HepG2 (cell line): ENCODE measurements at regions of chr4 and their contacts with region 1.

Region 1: DNA sequence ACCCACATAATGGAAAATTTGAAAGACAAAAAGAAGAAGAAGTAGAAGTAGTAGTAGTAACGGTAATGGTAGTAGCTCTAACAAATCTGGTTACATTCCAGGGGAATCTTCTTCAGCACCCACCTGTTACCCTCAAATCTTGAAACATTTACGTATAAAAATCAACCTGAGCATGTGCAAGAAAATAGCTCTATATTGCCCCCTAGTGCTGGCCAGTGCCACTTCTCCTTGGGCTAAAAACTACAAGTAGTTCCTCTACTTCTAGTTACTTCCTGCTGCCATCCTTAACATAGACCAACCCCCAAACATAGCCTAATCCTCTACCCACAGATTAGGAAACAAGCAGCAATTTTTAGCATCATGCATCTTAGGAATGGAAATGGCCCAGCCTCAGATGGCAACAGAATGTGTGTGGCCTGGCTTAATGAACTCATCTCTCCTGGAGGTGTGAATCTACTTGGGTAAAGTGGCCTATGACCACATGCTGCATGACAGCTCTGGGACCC is 3.1 kb downstream of the PDGFC start:
- DNase-seq: peak; percentile 55
- ATAC-seq: no peak
- H3K4me3 ChIP-seq: peak overlapping the region; percentile 24 to 82 (median 78); a peak in 5 of 6 replicates
- H3K27ac ChIP-seq: no peak overlapping the region
- H3K4me1 ChIP-seq: peaks cover 45% of the 10 kb centered on the region
- H3K27me3 ChIP-seq: no peaks in the 10 kb centered on the region; a peak in 1 of 5 replicates
- CTCF ChIP-seq: peak; percentile 76
- EP300 ChIP-seq: no peak
- POLR2A ChIP-seq: no peak
- RAD21 ChIP-seq: peak; percentile 65; the same call in 1 of the 2 replicates

Region 2: GRCh38 chr4:156475322-156475721 is 493.2 kb before region 1 on chr4:
- CTCF ChIA-PET with region 1: interaction called, 3 read pairs
- POLR2A ChIA-PET with region 1: no interaction called
- in situ Hi-C with region 1: loop called (anchors 10 kb)
- intact Hi-C with region 1: loop called (anchors 2 kb)
- DNase-seq: peak; percentile 15
- ATAC-seq: peak; percentile 75
- H3K4me3 ChIP-seq: no peak overlapping the region
- H3K27ac ChIP-seq: no peak overlapping the region
- H3K4me1 ChIP-seq: no peaks in the 10 kb centered on the region
- H3K27me3 ChIP-seq: no peaks in the 10 kb centered on the region
- CTCF ChIP-seq: peak; percentile 51
- EP300 ChIP-seq: no peak
- POLR2A ChIP-seq: no peak
- RAD21 ChIP-seq: no peak

Region 3: DNA sequence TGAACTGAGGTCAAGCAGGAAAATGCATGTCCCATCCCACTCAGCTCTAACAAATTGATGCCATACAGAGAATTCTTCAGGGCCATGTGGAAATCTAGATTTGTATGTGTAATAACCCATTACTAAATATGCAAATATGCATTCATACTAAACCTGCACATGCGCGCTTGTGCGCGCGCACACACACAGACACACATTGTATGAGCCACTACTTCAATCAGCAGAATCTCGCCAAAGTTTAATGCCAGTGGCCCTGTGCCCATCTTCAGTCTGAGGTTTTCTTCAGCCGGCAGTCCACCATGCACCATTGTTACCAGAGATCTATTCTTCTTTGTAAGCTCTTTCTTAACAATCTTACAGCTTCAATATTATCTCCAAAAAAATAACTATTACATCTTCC is 273.4 kb before region 1 on chr4:
- CTCF ChIA-PET with region 1: no interaction called
- POLR2A ChIA-PET with region 1: no interaction called
- in situ Hi-C with region 1: loop called (anchors 10 kb)
- intact Hi-C with region 1: no loop called
- DNase-seq: no peak
- ATAC-seq: no peak
- H3K4me3 ChIP-seq: no peak overlapping the region
- H3K27ac ChIP-seq: no peak overlapping the region
- H3K4me1 ChIP-seq: no peaks in the 10 kb centered on the region
- H3K27me3 ChIP-seq: no peaks in the 10 kb centered on the region
- CTCF ChIP-seq: no peak
- EP300 ChIP-seq: no peak
- POLR2A ChIP-seq: no peak
- RAD21 ChIP-seq: no peak

Region 4: GRCh38 chr4:156771171-156771837 is 197.2 kb before region 1 on chr4:
- CTCF ChIA-PET with region 1: no interaction called
- POLR2A ChIA-PET with region 1: no interaction called
- in situ Hi-C with region 1: loop called (anchors 10 kb)
- intact Hi-C with region 1: loop called (anchors 5 kb)
- DNase-seq: peak; percentile 36
- ATAC-seq: no peak
- H3K4me3 ChIP-seq: no peak overlapping the region
- H3K27ac ChIP-seq: peak overlapping the region; percentile 43
- H3K4me1 ChIP-seq: peaks cover 15% of the 10 kb centered on the region
- H3K27me3 ChIP-seq: no peaks in the 10 kb centered on the region
- CTCF ChIP-seq: no peak
- EP300 ChIP-seq: no peak
- POLR2A ChIP-seq: no peak
- RAD21 ChIP-seq: no peak

Region 5: DNA sequence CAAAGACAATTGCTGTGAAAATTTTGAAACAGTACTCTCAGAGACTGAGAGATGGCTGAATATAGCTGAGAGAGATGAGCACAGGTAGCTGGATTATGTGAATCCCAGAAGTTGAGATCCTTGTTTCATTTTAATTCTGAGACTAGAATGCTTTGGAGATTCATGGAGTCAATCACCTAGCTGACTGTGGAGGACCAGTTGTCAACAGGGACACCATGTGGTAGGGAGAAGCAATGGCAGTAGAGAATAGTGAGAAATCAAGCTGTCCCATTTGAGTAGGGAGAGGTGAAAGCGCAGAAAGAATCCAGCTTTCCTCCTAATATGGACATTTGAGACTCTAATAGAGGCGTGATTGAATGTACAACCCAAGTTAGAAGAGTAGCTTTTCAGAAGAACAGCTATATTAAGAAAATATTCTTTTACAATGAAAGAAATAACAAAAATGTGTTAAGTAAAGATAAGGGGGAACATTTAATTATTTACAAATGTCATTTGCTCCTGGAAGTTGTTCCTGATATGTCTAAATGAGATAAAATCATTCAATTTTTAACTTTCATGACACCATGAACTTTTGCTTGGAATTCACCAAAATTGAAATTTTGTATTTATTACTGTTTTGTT is 77.1 kb after region 1 on chr4:
- CTCF ChIA-PET with region 1: interaction called, 3 read pairs
- POLR2A ChIA-PET with region 1: interaction called, 3 read pairs
- in situ Hi-C with region 1: no loop called
- intact Hi-C with region 1: loop called (anchors 1 kb)
- DNase-seq: peak; percentile 47
- ATAC-seq: peak; percentile 96
- H3K4me3 ChIP-seq: no peak overlapping the region
- H3K27ac ChIP-seq: no peak overlapping the region
- H3K4me1 ChIP-seq: no peaks in the 10 kb centered on the region
- H3K27me3 ChIP-seq: 0 out of 5 replicates have a peak, but pooled peaks cover 0 to 3% of the 10 kb centered on the region in 2 experiments
- CTCF ChIP-seq: peak; percentile 83
- EP300 ChIP-seq: no peak
- POLR2A ChIP-seq: no peak
- RAD21 ChIP-seq: peak; percentile 53; the same call in 1 of the 2 replicates

Region 6: DNA sequence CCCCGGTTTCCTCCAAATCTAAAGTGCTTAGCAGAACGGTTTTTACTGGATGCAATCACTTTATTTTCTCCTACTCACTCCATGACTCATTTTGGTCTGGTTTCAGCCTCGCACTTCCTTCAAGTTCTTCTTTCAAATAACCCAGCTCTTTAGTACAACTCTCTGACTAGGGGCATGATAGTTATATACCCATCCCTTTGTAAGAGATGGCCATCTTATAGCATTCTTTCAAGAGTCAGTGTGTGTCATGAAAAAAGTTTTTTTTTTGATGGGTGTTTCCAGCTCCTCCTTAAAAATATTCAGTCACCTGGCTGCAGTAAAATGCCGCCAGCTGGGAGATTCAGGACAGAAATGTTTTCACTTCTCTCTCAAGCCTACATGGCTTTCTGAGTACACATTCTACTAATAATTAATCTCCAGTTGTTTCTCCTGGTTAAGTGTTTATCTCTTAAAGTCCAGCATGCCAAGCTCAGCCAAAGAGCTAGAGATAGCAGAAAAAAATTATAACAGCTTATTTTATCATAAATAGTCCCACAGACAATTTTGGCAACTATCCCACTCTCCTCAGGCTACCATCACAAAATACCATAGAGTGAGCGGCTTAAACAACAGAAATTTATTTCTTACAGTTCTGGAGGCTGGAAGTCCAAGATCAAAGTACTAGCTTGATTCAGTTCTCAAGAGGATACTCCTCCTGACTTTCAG is 1065.0 kb after region 1 on chr4:
- CTCF ChIA-PET with region 1: no interaction called
- POLR2A ChIA-PET with region 1: no interaction called
- in situ Hi-C with region 1: loop called (anchors 25 kb)
- intact Hi-C with region 1: no loop called
- DNase-seq: peak; percentile 19
- ATAC-seq: peak; percentile 63
- H3K4me3 ChIP-seq: no peak overlapping the region
- H3K27ac ChIP-seq: peak overlapping the region; percentile 33
- H3K4me1 ChIP-seq: peaks cover 57% of the 10 kb centered on the region
- H3K27me3 ChIP-seq: no peaks in the 10 kb centered on the region
- CTCF ChIP-seq: no peak
- EP300 ChIP-seq: no peak
- POLR2A ChIP-seq: no peak
- RAD21 ChIP-seq: no peak